ENCODE measurements at regions of chr4 and their contacts with region 1.

Region 1: GRCh38 chr4:167290678-167291077 is 56.4 kb upstream of the SPOCK3 start:
- DNase-seq: no peak
- ATAC-seq: no peak
- H3K4me3 ChIP-seq: no peak overlapping the region
- H3K4me3 Mint-ChIP-seq: no peak overlapping the region
- H3K27ac ChIP-seq: no peak overlapping the region
- H3K27ac Mint-ChIP-seq: no peak overlapping the region
- H3K4me1 ChIP-seq: no peaks in the 10 kb centered on the region
- H3K4me1 Mint-ChIP-seq: no peaks in the 10 kb centered on the region
- H3K27me3 ChIP-seq: no peaks in the 10 kb centered on the region
- H3K27me3 Mint-ChIP-seq: no peaks in the 10 kb centered on the region

Region 2: DNA sequence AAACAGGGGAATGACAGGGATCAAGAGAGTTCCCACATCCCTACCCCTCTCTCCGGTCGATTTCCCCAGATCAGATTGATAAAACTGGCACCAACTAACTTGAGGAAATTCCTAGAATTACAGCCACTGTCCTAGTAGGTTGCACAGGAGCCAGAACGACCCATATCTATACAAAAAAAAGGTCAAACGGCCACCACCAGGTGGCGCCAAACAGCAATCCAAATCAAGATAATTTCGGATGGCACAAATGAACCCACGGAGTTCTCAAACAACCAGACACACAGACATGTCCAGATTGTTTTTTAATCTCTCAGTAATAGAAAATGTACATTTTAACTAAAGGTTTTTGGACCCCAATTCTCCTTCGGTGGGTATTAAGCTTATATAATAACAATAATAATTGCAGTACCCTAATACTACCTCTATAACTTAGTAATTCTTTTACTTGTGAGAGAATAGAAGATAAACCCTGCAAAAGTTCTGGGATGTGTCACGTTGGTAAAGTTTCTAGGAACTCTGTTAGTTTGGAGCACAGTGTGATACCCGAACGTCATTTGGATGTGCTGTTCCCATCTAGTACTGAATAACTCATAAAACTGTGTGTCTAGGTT is 269.0 kb before region 1 on chr4:
- CTCF ChIA-PET with region 1: no interaction called
- POLR2A ChIA-PET with region 1: no interaction called
- intact Hi-C with region 1: loop called in 1 of 2 experiments (anchors 5 kb)
- DNase-seq: peak in 8 of 9 donors; percentile 5 to 48 (median 18)
- ATAC-seq: peak; percentile 59
- H3K4me3 ChIP-seq: no peak overlapping the region
- H3K4me3 Mint-ChIP-seq: no peak overlapping the region
- H3K27ac ChIP-seq: no peak overlapping the region
- H3K27ac Mint-ChIP-seq: no peak overlapping the region
- H3K4me1 ChIP-seq: no peaks in the 10 kb centered on the region
- H3K4me1 Mint-ChIP-seq: no peaks in the 10 kb centered on the region
- H3K27me3 ChIP-seq: no peaks in the 10 kb centered on the region
- H3K27me3 Mint-ChIP-seq: no peaks in the 10 kb centered on the region

Region 3: DNA sequence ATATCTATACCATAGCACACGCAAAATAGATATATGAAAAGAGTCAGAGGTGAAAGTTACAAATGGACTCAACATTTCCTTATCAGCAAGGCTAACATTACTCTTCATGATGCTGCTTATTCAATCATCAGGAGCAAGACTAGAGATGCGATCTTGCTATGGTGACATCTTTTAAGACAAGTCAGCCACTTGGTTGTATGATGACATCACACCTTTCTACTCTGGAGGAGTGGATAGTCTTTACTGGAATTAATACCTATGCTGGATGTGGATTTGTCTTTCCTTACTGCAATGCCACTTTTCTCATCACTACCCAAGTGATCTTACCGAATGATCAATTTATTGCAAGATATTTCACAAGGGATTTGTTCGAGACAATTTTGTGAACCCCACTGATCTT is 30.6 kb after region 1 on chr4:
- CTCF ChIA-PET with region 1: no interaction called
- POLR2A ChIA-PET with region 1: no interaction called
- intact Hi-C with region 1: no loop called
- DNase-seq: no peak
- ATAC-seq: no peak
- H3K4me3 ChIP-seq: no peak overlapping the region
- H3K4me3 Mint-ChIP-seq: no peak overlapping the region
- H3K27ac ChIP-seq: no peak overlapping the region
- H3K27ac Mint-ChIP-seq: no peak overlapping the region
- H3K4me1 ChIP-seq: no peaks in the 10 kb centered on the region
- H3K4me1 Mint-ChIP-seq: no peaks in the 10 kb centered on the region
- H3K27me3 ChIP-seq: no peaks in the 10 kb centered on the region
- H3K27me3 Mint-ChIP-seq: no peaks in the 10 kb centered on the region

Measured in naive thymus-derived CD4-positive, alpha-beta T cell (primary cell).